Breast epithelium (tissue), 4 donors: ENCODE measurements at regions of chr16 and their contacts with region 1.

Region 1: GRCh38 chr16:53100893-53101292 is 46.1 kb downstream of the CHD9 start:
- DNase-seq: no peak
- H3K4me3 ChIP-seq: no peak overlapping the region
- H3K27ac ChIP-seq: peak overlapping the region; percentile 94 to 96
- H3K4me1 ChIP-seq: peaks cover 3 to 20% of the 10 kb centered on the region in 2 donors
- H3K27me3 ChIP-seq: no peaks in the 10 kb centered on the region
- CTCF ChIP-seq: no peak
- POLR2A ChIP-seq: no peak

Region 2: DNA sequence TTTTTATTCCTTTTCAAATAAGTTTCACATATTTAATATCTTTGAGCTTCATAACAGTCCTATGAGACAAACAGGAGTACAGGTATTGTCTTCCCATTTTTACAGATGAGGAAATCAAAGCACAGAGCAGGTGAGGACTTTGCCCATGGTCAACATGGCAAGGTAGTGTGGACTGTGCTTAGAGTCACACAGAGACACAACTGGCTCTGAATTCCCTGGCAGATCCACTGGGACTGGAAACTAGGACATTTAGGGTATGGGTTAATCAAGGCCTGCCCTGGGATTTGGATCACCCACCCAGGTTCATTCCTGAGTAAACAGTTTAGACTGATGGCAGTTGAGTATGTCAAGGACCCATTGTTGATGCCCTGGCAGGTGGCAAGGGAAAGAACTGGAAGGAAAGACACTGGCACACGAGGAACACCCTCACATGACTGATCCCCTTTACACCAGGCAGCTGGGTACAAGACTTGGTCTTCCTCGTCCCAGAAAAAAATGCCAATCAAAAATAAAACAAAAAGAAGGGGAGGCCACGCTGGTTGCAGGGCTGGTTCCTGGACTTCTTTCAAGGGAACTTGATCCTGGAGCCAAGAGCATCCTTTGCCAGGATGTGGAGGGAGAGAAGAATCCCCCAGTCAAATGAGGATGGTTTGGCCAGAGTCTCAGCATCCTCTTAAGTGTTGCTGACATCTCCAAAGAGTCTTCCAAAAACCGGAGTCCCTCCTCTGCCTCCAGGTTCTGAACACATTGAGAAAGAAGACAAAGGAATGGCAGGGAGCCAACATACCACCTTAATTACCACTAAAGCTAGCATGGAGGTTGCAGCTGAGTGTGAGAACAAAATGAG is 11.2 kb before region 1 on chr16:
- intact Hi-C with region 1: loop called (anchors 1 kb)
- DNase-seq: peak in 1 of 2 donors; percentile 78
- H3K4me3 ChIP-seq: peak overlapping the region in 2 of 3 donors; percentile 1 to 52
- H3K27ac ChIP-seq: peak overlapping the region; percentile 81 to 96
- H3K4me1 ChIP-seq: peaks cover 33 to 37% of the 10 kb centered on the region in 2 donors
- H3K27me3 ChIP-seq: no peaks in the 10 kb centered on the region
- CTCF ChIP-seq: no peak
- POLR2A ChIP-seq: no peak

Region 3: GRCh38 chr16:54098247-54098646 is 997.4 kb after region 1 on chr16:
- intact Hi-C with region 1: no loop called
- DNase-seq: no peak
- H3K4me3 ChIP-seq: no peak overlapping the region
- H3K27ac ChIP-seq: peak overlapping the region; percentile 68 to 70
- H3K4me1 ChIP-seq: peaks cover 0 to 4% of the 10 kb centered on the region in 2 donors
- H3K27me3 ChIP-seq: no peaks in the 10 kb centered on the region
- CTCF ChIP-seq: no peak
- POLR2A ChIP-seq: no peak